Cardiac septum (tissue), 1 donor: ENCODE measurements at regions of chr13 and their contacts with region 1.

Region 1: DNA sequence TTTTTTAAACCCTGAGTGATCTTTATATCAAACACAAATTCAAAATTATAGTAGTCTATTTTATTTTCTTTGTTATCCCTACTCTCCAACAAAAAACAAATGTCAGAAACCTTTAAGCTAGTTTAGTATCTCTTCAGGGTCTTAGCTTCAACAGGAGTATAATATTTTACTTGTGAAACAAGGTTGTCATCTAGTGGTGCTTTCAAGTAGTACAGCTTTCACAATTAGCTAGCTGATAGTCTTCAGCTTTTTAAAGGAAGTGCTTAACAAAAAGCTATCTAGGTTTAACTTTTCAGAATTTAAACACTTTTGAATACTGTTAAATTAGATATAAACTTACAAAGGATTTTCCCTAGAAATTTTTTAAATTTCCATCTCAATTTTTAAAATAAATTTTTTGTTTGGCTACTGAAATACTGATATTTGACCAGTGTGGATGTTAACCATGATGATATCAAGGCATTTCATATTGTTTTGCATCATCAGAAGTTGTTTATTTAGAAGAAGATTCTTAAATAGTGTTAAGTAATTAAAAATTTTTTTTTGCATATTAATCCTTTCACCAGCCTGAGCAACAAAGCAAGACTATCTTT is 34.2 kb downstream of the TDRD3 start:
- DNase-seq: no peak

Region 2: DNA sequence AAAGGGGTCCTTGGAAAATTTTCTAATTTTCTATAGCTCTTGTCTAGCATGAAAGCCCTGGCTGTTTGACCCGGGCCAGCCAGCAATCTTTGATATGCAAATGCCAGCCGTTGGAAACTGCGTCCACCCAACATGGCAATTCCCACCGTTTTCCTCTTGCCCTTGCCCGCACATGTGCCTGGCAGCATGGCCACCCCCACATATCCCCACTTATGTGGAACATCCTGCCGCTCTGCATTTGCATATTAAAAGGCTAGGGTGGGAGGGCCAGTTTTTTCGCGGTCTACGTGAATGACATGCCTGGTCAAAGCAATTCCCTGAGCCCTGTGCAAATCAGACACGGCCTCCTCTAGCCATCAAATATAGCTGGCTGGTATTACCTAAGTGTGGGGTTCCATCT is 144.5 kb before region 1 on chr13:
- intact Hi-C with region 1: no loop called
- DNase-seq: no peak

Region 3: DNA sequence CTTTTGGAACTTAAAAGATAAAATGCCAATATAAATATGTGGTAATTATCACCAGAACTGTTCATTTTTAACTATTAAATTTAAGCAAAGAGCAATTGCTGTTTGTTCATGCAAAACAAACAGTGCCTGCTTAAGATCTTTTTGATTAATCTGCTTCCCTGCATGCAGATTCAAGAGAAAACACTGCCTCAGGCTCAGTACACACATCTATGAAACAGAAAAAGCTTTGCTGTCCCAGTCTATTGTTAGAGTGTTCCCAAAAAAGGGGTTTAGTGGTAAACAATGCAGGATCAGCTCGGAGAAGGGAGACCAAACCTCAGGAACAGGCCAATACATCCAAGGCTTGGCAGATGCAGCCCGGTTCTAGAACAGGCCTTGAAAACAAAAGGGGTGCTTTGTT is 83.5 kb before region 1 on chr13:
- intact Hi-C with region 1: loop called (anchors 10 kb)
- DNase-seq: no peak